Natural killer cell (primary cell): ENCODE measurements at regions of chr14 and their contacts with region 1.

Region 1: GRCh38 chr14:55333711-55334485 is 62.7 kb downstream of the FBXO34 start:
- DNase-seq: peak in 1 of 2 donors; percentile 54
- ATAC-seq: peak; percentile 24 to 41 (median 28)
- H3K4me3 ChIP-seq: no peak overlapping the region
- H3K4me3 Mint-ChIP-seq: peak overlapping the region; percentile 89
- H3K27ac ChIP-seq: peak overlapping the region; percentile 83
- H3K27ac Mint-ChIP-seq: peak overlapping the region; percentile 91 to 98
- H3K4me1 ChIP-seq: peaks cover 46% of the 10 kb centered on the region
- H3K4me1 Mint-ChIP-seq: peaks cover 75 to 81% of the 10 kb centered on the region in 2 donors
- H3K27me3 ChIP-seq: no peaks in the 10 kb centered on the region
- H3K27me3 Mint-ChIP-seq: no peaks in the 10 kb centered on the region
- CTCF ChIP-seq: no peak

Region 2: GRCh38 chr14:55270832-55271565 is 62.9 kb before region 1 on chr14 and contains the start of gene FBXO34:
- intact Hi-C with region 1: loop called (anchors 1 kb)
- DNase-seq: peak; percentile 99 to 100
- ATAC-seq: peak; percentile 89 to 98 (median 90)
- H3K4me3 ChIP-seq: peak within 1 kb of the TSS; percentile 99
- H3K4me3 Mint-ChIP-seq: peak within 1 kb of the TSS; percentile 92
- H3K27ac ChIP-seq: peak within 1 kb of the TSS; percentile 98
- H3K27ac Mint-ChIP-seq: peak within 1 kb of the TSS; percentile 90 to 94
- H3K4me1 ChIP-seq: peaks cover 9% of the 10 kb centered on the region
- H3K4me1 Mint-ChIP-seq: peaks cover 33 to 38% of the 10 kb centered on the region in 2 donors
- H3K27me3 ChIP-seq: no peaks in the 10 kb centered on the region
- H3K27me3 Mint-ChIP-seq: no peaks in the 10 kb centered on the region
- CTCF ChIP-seq: peak; percentile 97
- total RNA-seq, gene FBXO34: 34.7 to 39.3 (median 36.6) TPM

Region 3: GRCh38 chr14:55373784-55374705 is 40.1 kb after region 1 on chr14:
- intact Hi-C with region 1: loop called (anchors 1 kb)
- DNase-seq: peak in 1 of 2 donors; percentile 84
- ATAC-seq: peak; percentile 78 to 87 (median 85)
- H3K4me3 ChIP-seq: no peak overlapping the region
- H3K4me3 Mint-ChIP-seq: peak overlapping the region; percentile 77
- H3K27ac ChIP-seq: peak overlapping the region; percentile 78
- H3K27ac Mint-ChIP-seq: peak overlapping the region; percentile 85 to 87
- H3K4me1 ChIP-seq: peaks cover 17% of the 10 kb centered on the region
- H3K4me1 Mint-ChIP-seq: peaks cover 21 to 24% of the 10 kb centered on the region in 2 donors
- H3K27me3 ChIP-seq: no peaks in the 10 kb centered on the region
- H3K27me3 Mint-ChIP-seq: no peaks in the 10 kb centered on the region
- CTCF ChIP-seq: no peak

Region 4: GRCh38 chr14:55411426-55412389 is 77.8 kb after region 1 on chr14 and contains the start of gene ATG14:
- intact Hi-C with region 1: no loop called
- DNase-seq: peak; percentile 68 to 82
- ATAC-seq: peak; percentile 95 to 99 (median 99)
- H3K4me3 ChIP-seq: peak within 1 kb of the TSS; percentile 91
- H3K4me3 Mint-ChIP-seq: peak within 1 kb of the TSS; percentile 93
- H3K27ac ChIP-seq: peak within 1 kb of the TSS; percentile 52
- H3K27ac Mint-ChIP-seq: peak within 1 kb of the TSS; percentile 60 to 87
- H3K4me1 ChIP-seq: peaks cover 10% of the 10 kb centered on the region
- H3K4me1 Mint-ChIP-seq: peaks cover 30 to 34% of the 10 kb centered on the region in 2 donors
- H3K27me3 ChIP-seq: no peaks in the 10 kb centered on the region
- H3K27me3 Mint-ChIP-seq: peaks cover 0 to 3% of the 10 kb centered on the region in 2 donors
- CTCF ChIP-seq: no peak
- total RNA-seq, gene ATG14: 18.1 to 23.1 (median 20.5) TPM

Region 5: GRCh38 chr14:55807059-55807499 is 473.2 kb after region 1 on chr14:
- intact Hi-C with region 1: loop called (anchors 10 kb)
- DNase-seq: peak; percentile 63 to 90
- ATAC-seq: peak; percentile 82 to 92 (median 88)
- H3K4me3 ChIP-seq: no peak overlapping the region
- H3K4me3 Mint-ChIP-seq: peak overlapping the region; percentile 78
- H3K27ac ChIP-seq: peak overlapping the region; percentile 85
- H3K27ac Mint-ChIP-seq: peak overlapping the region; percentile 88 to 96
- H3K4me1 ChIP-seq: peaks cover 29% of the 10 kb centered on the region
- H3K4me1 Mint-ChIP-seq: peaks cover 63 to 65% of the 10 kb centered on the region in 2 donors
- H3K27me3 ChIP-seq: no peaks in the 10 kb centered on the region
- H3K27me3 Mint-ChIP-seq: no peaks in the 10 kb centered on the region
- CTCF ChIP-seq: no peak